Body of pancreas (tissue), 4 donors: ENCODE measurements at regions of chr3 and their contacts with region 1.

Region 1: GRCh38 chr3:48507351-48508061 is 3.5 kb upstream of the SHISA5 start:
- DNase-seq: peak; percentile 57 to 77 (median 74)
- ATAC-seq: peak; percentile 23
- H3K4me3 ChIP-seq: no peak overlapping the region
- H3K27ac ChIP-seq: no peak overlapping the region
- H3K4me1 ChIP-seq: peaks cover 25% of the 10 kb centered on the region
- H3K27me3 ChIP-seq: no peaks in the 10 kb centered on the region
- CTCF ChIP-seq: peak in 6 of 7 experiments; percentile 23 to 67 (median 55)
- POLR2A ChIP-seq: no peak

Region 2: DNA sequence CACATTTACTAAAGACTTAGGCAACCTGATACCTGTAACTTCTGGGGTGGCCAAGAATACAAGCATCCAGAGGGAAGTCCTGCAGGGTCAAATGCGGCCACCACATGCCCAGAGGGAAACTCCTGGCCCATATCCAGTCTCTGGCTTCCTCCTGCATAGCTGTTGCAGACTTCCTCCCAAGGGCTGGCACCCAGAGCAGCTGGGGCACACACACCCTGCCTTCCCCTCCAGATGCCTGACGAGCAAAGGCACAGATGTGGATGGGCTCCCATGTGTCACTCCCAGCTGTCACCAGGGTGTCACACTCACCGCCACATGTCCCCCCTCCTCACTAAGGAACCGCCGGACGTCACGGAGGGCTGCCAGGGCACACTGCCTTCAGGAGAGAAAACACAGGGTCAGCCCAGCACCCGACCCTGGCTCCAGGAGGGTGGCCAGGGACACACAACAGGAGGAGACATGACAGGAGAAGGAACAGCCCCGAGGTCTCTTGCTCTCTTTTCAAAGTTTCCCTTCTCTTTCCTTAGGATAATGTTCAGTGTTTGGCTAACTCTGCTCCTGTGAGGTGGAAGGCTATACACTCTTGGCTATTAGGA is 35.9 kb after region 1 on chr3:
- intact Hi-C with region 1: loop called (anchors 5 kb)
- DNase-seq: peak in 1 of 4 donors; percentile 58
- ATAC-seq: no peak
- H3K4me3 ChIP-seq: no peak overlapping the region
- H3K27ac ChIP-seq: no peak overlapping the region
- H3K4me1 ChIP-seq: no peaks in the 10 kb centered on the region
- H3K27me3 ChIP-seq: no peaks in the 10 kb centered on the region
- CTCF ChIP-seq: no peak
- POLR2A ChIP-seq: no peak

Region 3: GRCh38 chr3:48747015-48747615 is 239.6 kb after region 1 on chr3:
- intact Hi-C with region 1: no loop called
- DNase-seq: no peak
- ATAC-seq: no peak
- H3K4me3 ChIP-seq: no peak overlapping the region
- H3K27ac ChIP-seq: peak overlapping the region in 2 of 4 donors; percentile 23 to 58
- H3K4me1 ChIP-seq: no peaks in the 10 kb centered on the region
- H3K27me3 ChIP-seq: no peaks in the 10 kb centered on the region
- CTCF ChIP-seq: no peak
- POLR2A ChIP-seq: no peak